CD8-positive, alpha-beta T cell (primary cell): ENCODE measurements at regions of chr21 and their contacts with region 1.

Region 1: GRCh38 chr21:44873356-44874239 is at the start of gene PTTG1IP:
- DNase-seq: peak; percentile 98 to 100 (median 99)
- ATAC-seq: peak; percentile 82
- H3K4me3 ChIP-seq: peak within 1 kb of the TSS; percentile 60 to 76
- H3K4me3 Mint-ChIP-seq: peak within 1 kb of the TSS; percentile 93
- H3K27ac ChIP-seq: peak within 1 kb of the TSS; percentile 62 to 68
- H3K27ac Mint-ChIP-seq: peak within 1 kb of the TSS; percentile 91
- H3K4me1 ChIP-seq: peaks cover 43% of the 10 kb centered on the region
- H3K4me1 Mint-ChIP-seq: peaks cover 53% of the 10 kb centered on the region
- H3K27me3 ChIP-seq: no peaks in the 10 kb centered on the region
- H3K27me3 Mint-ChIP-seq: no peaks in the 10 kb centered on the region
- CTCF ChIP-seq: no peak
- total RNA-seq, gene PTTG1IP: 71.0 to 73.3 TPM

Region 2: DNA sequence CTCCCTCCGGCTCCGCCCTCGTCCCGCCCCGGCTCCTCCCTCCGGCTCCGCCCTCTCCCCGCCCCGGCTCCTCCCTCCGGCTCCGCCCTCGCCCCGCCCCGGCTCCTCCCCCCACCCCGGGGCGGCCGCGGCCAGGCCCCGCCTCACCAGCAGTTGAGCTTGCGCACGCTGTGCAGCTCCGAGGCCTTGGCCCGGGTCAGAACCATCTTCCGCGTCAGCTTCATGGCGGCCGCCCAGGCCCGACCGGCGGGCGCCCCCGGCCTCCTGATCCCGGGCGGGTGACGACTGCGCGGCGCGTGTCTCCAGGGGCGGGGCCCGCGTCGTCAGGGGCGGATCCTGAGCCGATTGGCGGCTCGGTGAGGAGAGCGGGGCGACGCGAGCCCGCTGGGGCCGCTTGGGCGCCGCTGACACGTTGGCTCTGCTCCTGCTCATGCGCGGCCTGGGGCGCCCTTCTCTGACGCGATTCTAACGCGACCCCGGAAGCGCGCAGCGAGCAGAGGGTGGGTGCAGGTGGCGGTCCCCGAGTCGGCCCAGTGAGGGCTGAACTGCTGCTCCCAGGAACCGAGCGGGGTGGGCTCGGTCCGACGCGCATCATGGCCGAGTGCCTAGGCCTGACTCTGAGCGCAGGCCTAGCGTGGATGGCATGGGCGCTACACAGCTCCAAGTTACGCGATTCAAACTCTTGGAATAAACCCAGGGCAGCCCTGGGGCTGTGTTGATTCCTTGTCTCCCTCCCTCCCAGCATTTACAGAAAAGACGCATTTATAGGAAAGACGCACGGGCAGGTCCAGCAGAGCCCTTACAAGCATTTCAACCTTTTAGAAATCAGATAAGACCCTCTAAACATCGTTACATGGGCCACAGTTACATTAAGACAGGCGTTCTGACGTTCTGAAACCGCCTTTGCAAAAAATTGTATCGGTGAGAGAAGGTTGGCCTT is 534.4 kb before region 1 on chr21 and contains the start of gene CFAP410:
- CTCF ChIA-PET with region 1: no interaction called
- POLR2A ChIA-PET with region 1: no interaction called
- intact Hi-C with region 1: loop called (anchors 2 to 5 kb)
- DNase-seq: peak; percentile 89 to 98 (median 95)
- ATAC-seq: peak; percentile 84
- H3K4me3 ChIP-seq: peak within 1 kb of the TSS; percentile 73 to 76
- H3K4me3 Mint-ChIP-seq: peak within 1 kb of the TSS; percentile 94
- H3K27ac ChIP-seq: peak within 1 kb of the TSS; percentile 92 to 96
- H3K27ac Mint-ChIP-seq: peak within 1 kb of the TSS; percentile 99
- H3K4me1 ChIP-seq: peaks cover 17% of the 10 kb centered on the region
- H3K4me1 Mint-ChIP-seq: peaks cover 32% of the 10 kb centered on the region
- H3K27me3 ChIP-seq: no peaks in the 10 kb centered on the region
- H3K27me3 Mint-ChIP-seq: no peaks in the 10 kb centered on the region
- CTCF ChIP-seq: no peak
- total RNA-seq, gene CFAP410: 69.7 to 70.5 TPM

Region 3: GRCh38 chr21:44817506-44817880 is 56.1 kb before region 1 on chr21:
- CTCF ChIA-PET with region 1: interaction called, 3 read pairs
- POLR2A ChIA-PET with region 1: interaction called, 6 read pairs
- intact Hi-C with region 1: loop called (anchors 1 kb)
- DNase-seq: peak; percentile 85 to 96 (median 91)
- ATAC-seq: peak; percentile 92
- H3K4me3 ChIP-seq: peak overlapping the region; percentile 46 to 58
- H3K4me3 Mint-ChIP-seq: peak overlapping the region; percentile 69
- H3K27ac ChIP-seq: peak overlapping the region in 1 of 2 experiments; percentile 76
- H3K27ac Mint-ChIP-seq: no peak overlapping the region
- H3K4me1 ChIP-seq: peaks cover 18% of the 10 kb centered on the region
- H3K4me1 Mint-ChIP-seq: peaks cover 9% of the 10 kb centered on the region
- H3K27me3 ChIP-seq: no peaks in the 10 kb centered on the region
- H3K27me3 Mint-ChIP-seq: no peaks in the 10 kb centered on the region
- CTCF ChIP-seq: no peak

Region 4: GRCh38 chr21:44892536-44893277 is 19.1 kb after region 1 on chr21:
- CTCF ChIA-PET with region 1: interaction called, 25 read pairs
- POLR2A ChIA-PET with region 1: interaction called, 4 read pairs
- intact Hi-C with region 1: loop called in 1 of 2 experiments (anchors 2 kb)
- DNase-seq: peak; percentile 56 to 86 (median 82)
- ATAC-seq: peak; percentile 90
- H3K4me3 ChIP-seq: no peak overlapping the region
- H3K4me3 Mint-ChIP-seq: no peak overlapping the region
- H3K27ac ChIP-seq: peak overlapping the region in 1 of 2 experiments; percentile 34
- H3K27ac Mint-ChIP-seq: peak overlapping the region; percentile 79
- H3K4me1 ChIP-seq: peaks cover 13% of the 10 kb centered on the region
- H3K4me1 Mint-ChIP-seq: peaks cover 15% of the 10 kb centered on the region
- H3K27me3 ChIP-seq: no peaks in the 10 kb centered on the region
- H3K27me3 Mint-ChIP-seq: no peaks in the 10 kb centered on the region
- CTCF ChIP-seq: peak; percentile 96

Region 5: GRCh38 chr21:44939532-44940115 is 66.0 kb after region 1 on chr21 and contains the start of gene SLX9:
- CTCF ChIA-PET with region 1: interaction called, 42 read pairs
- POLR2A ChIA-PET with region 1: interaction called, 3 read pairs
- intact Hi-C with region 1: loop called (anchors 1 to 5 kb)
- DNase-seq: peak; percentile 57 to 90 (median 78)
- ATAC-seq: peak; percentile 90
- H3K4me3 ChIP-seq: peak within 1 kb of the TSS; percentile 72 to 79
- H3K4me3 Mint-ChIP-seq: peak within 1 kb of the TSS; percentile 86
- H3K27ac ChIP-seq: peak within 1 kb of the TSS; percentile 40 to 56
- H3K27ac Mint-ChIP-seq: peak within 1 kb of the TSS; percentile 87
- H3K4me1 ChIP-seq: peaks cover 36% of the 10 kb centered on the region
- H3K4me1 Mint-ChIP-seq: peaks cover 41% of the 10 kb centered on the region
- H3K27me3 ChIP-seq: no peaks in the 10 kb centered on the region
- H3K27me3 Mint-ChIP-seq: no peaks in the 10 kb centered on the region
- CTCF ChIP-seq: no peak
- total RNA-seq, gene SLX9: 8.2 to 10.0 TPM